Activated naive CD4-positive, alpha-beta T cell treated with anti-CD3 and anti-CD28 coated beads for 36 hours (primary cell): ENCODE measurements at regions of chr3 and their contacts with region 1.

Region 1: DNA sequence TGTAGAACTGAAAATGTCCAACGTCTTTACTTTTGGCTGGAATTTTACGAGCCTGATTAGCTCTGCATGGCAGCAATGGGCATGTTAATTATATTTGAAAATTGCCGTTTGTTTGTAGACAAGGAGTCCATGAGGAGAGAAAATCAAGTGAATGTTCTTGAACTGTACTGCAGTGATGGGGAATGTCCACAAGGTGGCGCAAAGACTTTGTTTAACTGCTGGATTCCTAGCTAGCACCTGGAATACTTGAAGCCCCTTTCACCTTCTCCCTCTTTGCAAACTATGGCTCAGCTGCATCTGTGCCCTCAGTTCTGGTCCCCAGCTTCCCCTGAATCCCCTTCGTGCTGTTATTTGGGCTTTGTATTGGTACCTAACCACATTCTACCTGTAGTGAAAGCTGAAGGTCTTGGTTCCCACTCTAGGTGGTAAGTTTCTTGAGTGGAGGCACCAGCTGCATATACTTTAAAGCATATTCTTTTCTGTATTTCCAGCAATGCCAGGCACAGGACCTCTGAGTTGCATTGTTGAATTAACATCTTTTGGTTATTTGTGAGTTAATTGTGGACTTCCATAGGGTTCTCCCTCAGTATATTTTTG is 25.3 kb downstream of the EXOG start:
- DNase-seq: peak; percentile 83
- H3K4me3 Mint-ChIP-seq: no peak overlapping the region
- H3K27ac Mint-ChIP-seq: no peak overlapping the region
- H3K4me1 Mint-ChIP-seq: peaks cover 26% of the 10 kb centered on the region
- H3K27me3 Mint-ChIP-seq: no peaks in the 10 kb centered on the region

Region 2: GRCh38 chr3:38264353-38264771 is 257.1 kb before region 1 on chr3:
- CTCF ChIA-PET with region 1: no interaction called
- intact Hi-C with region 1: no loop called
- DNase-seq: no peak
- H3K4me3 Mint-ChIP-seq: no peak overlapping the region
- H3K27ac Mint-ChIP-seq: no peak overlapping the region
- H3K4me1 Mint-ChIP-seq: peaks cover 13% of the 10 kb centered on the region
- H3K27me3 Mint-ChIP-seq: no peaks in the 10 kb centered on the region

Region 3: DNA sequence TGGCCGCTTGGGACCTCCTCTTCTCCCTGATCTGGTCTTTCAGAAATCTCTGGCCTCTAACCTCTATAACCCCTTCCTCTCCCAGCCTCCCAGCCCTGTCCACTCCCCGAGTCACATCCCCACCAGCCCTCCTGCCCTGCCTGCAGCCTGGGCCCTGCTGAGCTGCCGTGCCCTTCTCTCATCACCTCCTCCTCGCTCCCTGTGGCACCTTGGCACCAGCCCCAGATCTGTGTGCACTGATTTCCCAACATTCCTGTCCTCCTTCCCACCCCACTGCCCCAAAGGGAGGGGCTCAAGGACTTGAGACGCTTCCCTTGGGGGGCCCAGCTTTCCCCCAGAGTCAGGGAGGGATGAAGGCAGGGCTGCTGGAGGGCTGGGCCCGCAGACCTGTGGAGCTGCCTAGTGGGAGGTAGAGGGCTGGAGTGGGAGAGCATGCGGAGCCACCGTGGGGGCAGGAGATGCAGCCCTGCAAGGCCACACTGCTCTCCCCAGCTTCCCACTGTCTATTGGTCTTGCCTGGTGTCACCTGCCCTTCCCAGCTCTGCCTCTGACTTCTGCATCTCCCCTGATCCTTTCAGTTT is 17.4 kb after region 1 on chr3:
- CTCF ChIA-PET with region 1: interaction called, 17 read pairs
- intact Hi-C with region 1: no loop called
- DNase-seq: no peak
- H3K4me3 Mint-ChIP-seq: no peak overlapping the region
- H3K27ac Mint-ChIP-seq: no peak overlapping the region
- H3K4me1 Mint-ChIP-seq: peaks cover 3% of the 10 kb centered on the region
- H3K27me3 Mint-ChIP-seq: no peaks in the 10 kb centered on the region

Region 4: GRCh38 chr3:38662544-38662943 is 141.1 kb after region 1 on chr3:
- CTCF ChIA-PET with region 1: interaction called, 14 read pairs
- intact Hi-C with region 1: no loop called
- DNase-seq: no peak
- H3K4me3 Mint-ChIP-seq: no peak overlapping the region
- H3K27ac Mint-ChIP-seq: no peak overlapping the region
- H3K4me1 Mint-ChIP-seq: no peaks in the 10 kb centered on the region
- H3K27me3 Mint-ChIP-seq: peaks cover 17% of the 10 kb centered on the region

Region 5: GRCh38 chr3:39000008-39000450 is 478.5 kb after region 1 on chr3:
- CTCF ChIA-PET with region 1: interaction called, 14 read pairs
- intact Hi-C with region 1: loop called (anchors 1 kb)
- DNase-seq: no peak
- H3K4me3 Mint-ChIP-seq: no peak overlapping the region
- H3K27ac Mint-ChIP-seq: no peak overlapping the region
- H3K4me1 Mint-ChIP-seq: no peaks in the 10 kb centered on the region
- H3K27me3 Mint-ChIP-seq: no peaks in the 10 kb centered on the region